ENCODE measurements at regions of chr13 and their contacts with region 1.

Region 1: GRCh38 chr13:76512721-76513145 is 373.5 kb downstream of the KCTD12 start:
- DNase-seq: peak; percentile 98
- H3K4me3 ChIP-seq: no peak overlapping the region
- H3K27ac ChIP-seq: peak overlapping the region; percentile 89
- H3K4me1 ChIP-seq: peaks cover 49% of the 10 kb centered on the region
- H3K27me3 ChIP-seq: no peaks in the 10 kb centered on the region
- CTCF ChIP-seq: no peak
- POLR2A ChIP-seq: peak; percentile 90

Region 2: DNA sequence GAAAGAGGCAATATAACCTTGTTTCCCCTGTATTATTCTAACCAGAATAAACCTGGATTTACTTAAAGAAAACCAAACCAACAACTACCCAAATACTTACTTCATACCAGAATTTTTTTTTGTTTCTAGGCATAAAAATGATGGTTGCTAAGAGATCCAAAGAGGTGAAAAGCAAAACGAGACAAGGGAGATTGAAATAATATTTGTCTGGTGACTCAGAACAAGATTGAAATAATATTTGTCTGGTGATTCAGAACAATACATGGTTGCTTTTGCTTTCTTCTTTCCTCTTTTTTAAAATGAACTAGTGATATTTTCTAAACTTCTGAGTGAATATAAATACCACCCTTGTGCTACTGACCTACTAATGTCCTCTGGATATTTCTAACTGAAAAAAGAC is 219.4 kb before region 1 on chr13:
- CTCF ChIA-PET with region 1: no interaction called
- POLR2A ChIA-PET with region 1: no interaction called
- dilution Hi-C with region 1: no loop called
- intact Hi-C with region 1: loop called (anchors 5 kb)
- DNase-seq: peak; percentile 89
- H3K4me3 ChIP-seq: no peak overlapping the region
- H3K27ac ChIP-seq: peak overlapping the region; percentile 50
- H3K4me1 ChIP-seq: peaks cover 12% of the 10 kb centered on the region
- H3K27me3 ChIP-seq: no peaks in the 10 kb centered on the region
- CTCF ChIP-seq: no peak
- POLR2A ChIP-seq: no peak

Region 3: GRCh38 chr13:76610819-76611415 is 98.2 kb after region 1 on chr13:
- CTCF ChIA-PET with region 1: interaction called, 3 read pairs
- POLR2A ChIA-PET with region 1: no interaction called
- dilution Hi-C with region 1: no loop called
- intact Hi-C with region 1: loop called (anchors 5 kb)
- DNase-seq: peak; percentile 96
- H3K4me3 ChIP-seq: no peak overlapping the region
- H3K27ac ChIP-seq: no peak overlapping the region
- H3K4me1 ChIP-seq: peaks cover 10% of the 10 kb centered on the region
- H3K27me3 ChIP-seq: no peaks in the 10 kb centered on the region
- CTCF ChIP-seq: no peak
- POLR2A ChIP-seq: no peak

Region 4: DNA sequence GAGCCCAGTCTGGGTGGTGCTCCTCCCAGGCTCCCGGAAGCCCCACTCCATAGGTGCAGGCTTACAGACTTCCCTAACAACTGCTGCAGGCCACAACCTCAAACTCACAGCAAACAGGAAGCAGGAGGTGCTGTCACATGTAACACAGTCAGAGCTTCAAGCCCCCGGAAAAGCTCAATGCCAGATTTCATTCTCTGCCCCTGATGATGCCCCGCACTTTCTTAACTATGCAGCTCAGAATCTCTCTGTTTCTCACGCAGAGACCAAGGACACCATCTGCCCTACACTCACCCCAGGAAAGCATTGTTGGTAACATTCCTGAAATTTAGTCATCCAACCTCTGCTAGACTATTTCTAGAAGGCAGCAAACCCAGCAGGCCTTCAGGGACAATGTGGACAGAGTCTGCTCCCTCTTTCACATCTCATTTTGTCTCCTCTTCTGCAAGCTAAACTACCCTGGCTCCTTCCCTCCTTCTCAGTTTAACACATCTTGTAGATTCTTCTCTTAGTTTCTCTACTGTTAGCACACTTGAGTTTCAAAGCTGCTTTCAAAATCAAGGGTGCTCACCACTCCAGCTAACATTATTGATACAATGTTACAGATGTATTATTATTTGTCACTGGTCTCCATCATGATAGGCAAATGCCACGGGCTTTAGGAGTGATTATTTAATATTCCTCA is 211.0 kb after region 1 on chr13:
- CTCF ChIA-PET with region 1: no interaction called
- POLR2A ChIA-PET with region 1: no interaction called
- dilution Hi-C with region 1: no loop called
- intact Hi-C with region 1: loop called (anchors 1 kb)
- DNase-seq: peak; percentile 95
- H3K4me3 ChIP-seq: no peak overlapping the region
- H3K27ac ChIP-seq: peak overlapping the region; percentile 81
- H3K4me1 ChIP-seq: peaks cover 32% of the 10 kb centered on the region
- H3K27me3 ChIP-seq: no peaks in the 10 kb centered on the region
- CTCF ChIP-seq: no peak
- POLR2A ChIP-seq: peak; percentile 15

Region 5: GRCh38 chr13:78022164-78022877 is 1509.6 kb after region 1 on chr13:
- CTCF ChIA-PET with region 1: no interaction called
- POLR2A ChIA-PET with region 1: no interaction called
- dilution Hi-C with region 1: no loop called
- intact Hi-C with region 1: loop called (anchors 5 kb)
- DNase-seq: peak; percentile 95
- H3K4me3 ChIP-seq: no peak overlapping the region
- H3K27ac ChIP-seq: peak overlapping the region; percentile 72
- H3K4me1 ChIP-seq: peaks cover 25% of the 10 kb centered on the region
- H3K27me3 ChIP-seq: no peaks in the 10 kb centered on the region
- CTCF ChIP-seq: no peak
- POLR2A ChIP-seq: no peak